Gastrocnemius medialis (tissue), 4 donors: ENCODE measurements at regions of chr2 and their contacts with region 1.

Region 1: GRCh38 chr2:64330281-64331113 is 123.5 kb upstream of the LGALSL start:
- DNase-seq: peak; percentile 47 to 50
- ATAC-seq: peak; percentile 59 to 75
- H3K4me3 ChIP-seq: peak overlapping the region; percentile 18 to 52 (median 46)
- H3K27ac ChIP-seq: peak overlapping the region; percentile 8 to 69 (median 60)
- H3K4me1 ChIP-seq: peaks cover 27 to 42% of the 10 kb centered on the region in 2 donors
- H3K27me3 ChIP-seq: no peaks in the 10 kb centered on the region
- CTCF ChIP-seq: peak; percentile 84 to 94 (median 92)
- POLR2A ChIP-seq: no peak

Region 2: GRCh38 chr2:64404002-64404731 is 73.7 kb after region 1 on chr2:
- in situ Hi-C with region 1: no loop called
- intact Hi-C with region 1: no loop called
- DNase-seq: peak; percentile 56 to 73
- ATAC-seq: peak; percentile 71 to 72
- H3K4me3 ChIP-seq: peak overlapping the region in 3 of 4 donors; percentile 2 to 32 (median 29)
- H3K27ac ChIP-seq: peak overlapping the region; percentile 74 to 83 (median 80)
- H3K4me1 ChIP-seq: peaks cover 60 to 65% of the 10 kb centered on the region in 2 donors
- H3K27me3 ChIP-seq: no peaks in the 10 kb centered on the region
- CTCF ChIP-seq: no peak
- POLR2A ChIP-seq: no peak

Region 3: GRCh38 chr2:64482765-64483504 is 152.4 kb after region 1 on chr2:
- in situ Hi-C with region 1: loop called (anchors 5 kb)
- intact Hi-C with region 1: loop called (anchors 1 kb)
- DNase-seq: no peak
- ATAC-seq: no peak
- H3K4me3 ChIP-seq: no peak overlapping the region
- H3K27ac ChIP-seq: no peak overlapping the region
- H3K4me1 ChIP-seq: peaks cover 0 to 5% of the 10 kb centered on the region in 2 donors
- H3K27me3 ChIP-seq: no peaks in the 10 kb centered on the region
- CTCF ChIP-seq: no peak
- POLR2A ChIP-seq: no peak

Region 4: GRCh38 chr2:64562148-64562784 is 231.8 kb after region 1 on chr2:
- in situ Hi-C with region 1: loop called in 1 of 4 experiments (anchors 5 kb)
- intact Hi-C with region 1: loop called (anchors 1 kb)
- DNase-seq: no peak
- ATAC-seq: no peak
- H3K4me3 ChIP-seq: no peak overlapping the region
- H3K27ac ChIP-seq: no peak overlapping the region
- H3K4me1 ChIP-seq: peaks cover 5 to 16% of the 10 kb centered on the region in 2 donors
- H3K27me3 ChIP-seq: no peaks in the 10 kb centered on the region
- CTCF ChIP-seq: peak in 2 of 5 experiments; percentile 40 to 41
- POLR2A ChIP-seq: no peak

Region 5: GRCh38 chr2:64865073-64865830 is 534.8 kb after region 1 on chr2:
- in situ Hi-C with region 1: loop called in 1 of 4 experiments (anchors 25 kb)
- intact Hi-C with region 1: loop called (anchors 5 kb)
- DNase-seq: peak; percentile 39 to 58
- ATAC-seq: peak; percentile 90 to 91
- H3K4me3 ChIP-seq: peak overlapping the region; percentile 77 to 80 (median 78)
- H3K27ac ChIP-seq: peak overlapping the region; percentile 77 to 87 (median 84)
- H3K4me1 ChIP-seq: peaks cover 5 to 23% of the 10 kb centered on the region in 2 donors
- H3K27me3 ChIP-seq: no peaks in the 10 kb centered on the region
- CTCF ChIP-seq: peak; percentile 48 to 99 (median 98)
- POLR2A ChIP-seq: no peak